ENCODE measurements at regions of chr12 and their contacts with region 1.

Region 1: DNA sequence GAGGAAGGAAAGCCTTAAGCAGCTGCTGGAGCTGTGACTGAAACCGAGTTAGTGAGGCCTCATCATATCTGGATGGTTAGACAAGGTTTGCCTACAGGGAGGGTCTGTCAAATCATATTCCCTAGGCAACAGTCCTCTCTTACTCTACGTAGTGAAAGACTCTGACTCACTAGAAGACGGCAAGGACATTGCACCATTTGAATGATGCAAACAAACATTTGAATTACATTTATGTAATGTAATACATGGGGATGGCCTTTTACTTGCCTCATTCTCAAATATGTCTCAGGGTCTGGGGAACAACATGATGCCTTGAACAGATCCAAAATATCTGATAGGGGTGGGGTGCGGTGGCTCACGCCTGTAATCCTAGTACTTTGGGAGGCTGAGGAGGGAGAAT is 29.8 kb upstream of the STRAP start:
- DNase-seq: no peak
- H3K4me3 ChIP-seq: no peak overlapping the region
- CTCF ChIP-seq: no peak
- POLR2A ChIP-seq: no peak

Region 2: GRCh38 chr12:15592934-15593333 is 259.4 kb before region 1 on chr12:
- intact Hi-C with region 1: loop called (anchors 1 kb)
- DNase-seq: no peak
- H3K4me3 ChIP-seq: no peak overlapping the region
- CTCF ChIP-seq: no peak
- POLR2A ChIP-seq: no peak

Region 3: GRCh38 chr12:15599266-15600037 is 252.9 kb before region 1 on chr12:
- intact Hi-C with region 1: loop called (anchors 1 kb)
- DNase-seq: no peak
- H3K4me3 ChIP-seq: no peak overlapping the region
- CTCF ChIP-seq: no peak
- POLR2A ChIP-seq: no peak

Region 4: GRCh38 chr12:15728118-15728598 is 124.2 kb before region 1 on chr12:
- intact Hi-C with region 1: no loop called
- DNase-seq: no peak
- H3K4me3 ChIP-seq: no peak overlapping the region
- CTCF ChIP-seq: no peak
- POLR2A ChIP-seq: no peak

Measured in lower leg skin (tissue), 4 donors.